ENCODE measurements at regions of chr15 and their contacts with region 1.

Region 1: DNA sequence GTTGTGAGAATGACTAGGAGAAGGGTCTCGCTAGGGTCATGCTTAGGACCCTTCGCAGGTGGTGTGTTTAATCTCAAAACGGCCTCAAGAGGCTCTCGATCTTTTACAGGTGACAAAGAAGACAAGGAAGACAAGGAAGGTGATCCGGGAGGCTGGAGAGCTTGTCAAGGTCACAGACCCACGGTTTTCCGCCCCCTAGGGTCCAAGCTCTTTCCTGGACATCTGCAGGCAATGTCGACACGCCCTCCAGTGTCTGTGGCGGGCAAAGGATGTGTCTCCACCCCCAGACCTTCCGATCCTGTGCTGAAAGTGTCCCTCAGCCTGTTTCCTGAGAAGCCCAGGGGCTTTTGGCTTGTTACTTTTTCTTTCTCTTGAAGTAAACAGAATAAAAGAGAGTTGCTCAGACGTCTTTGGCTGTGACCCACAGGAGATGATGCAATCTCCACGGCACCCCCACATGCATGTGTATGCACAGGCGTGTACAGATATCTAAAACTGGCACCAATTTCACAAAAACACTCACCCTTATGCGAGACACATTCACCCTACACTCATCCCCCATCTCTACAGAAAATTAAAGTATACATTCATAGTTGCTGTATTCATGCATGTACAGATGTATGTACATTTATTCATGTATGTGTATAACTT is 108.8 kb downstream of the KLF13 start:
- DNase-seq: peak; percentile 96
- H3K4me3 Mint-ChIP-seq: peak overlapping the region; percentile 79
- H3K27ac Mint-ChIP-seq: peak overlapping the region; percentile 96
- H3K4me1 Mint-ChIP-seq: peaks cover 78% of the 10 kb centered on the region
- H3K27me3 Mint-ChIP-seq: no peaks in the 10 kb centered on the region

Region 2: GRCh38 chr15:31215490-31216214 is 219.7 kb before region 1 on chr15:
- intact Hi-C with region 1: loop called (anchors 1 kb)
- DNase-seq: peak; percentile 94
- H3K4me3 Mint-ChIP-seq: peak overlapping the region; percentile 87
- H3K27ac Mint-ChIP-seq: peak overlapping the region; percentile 71
- H3K4me1 Mint-ChIP-seq: peaks cover 36% of the 10 kb centered on the region
- H3K27me3 Mint-ChIP-seq: no peaks in the 10 kb centered on the region

Region 3: GRCh38 chr15:31344823-31345605 is 90.4 kb before region 1 on chr15:
- intact Hi-C with region 1: loop called (anchors 1 kb)
- DNase-seq: peak; percentile 76
- H3K4me3 Mint-ChIP-seq: peak overlapping the region; percentile 95
- H3K27ac Mint-ChIP-seq: peak overlapping the region; percentile 99
- H3K4me1 Mint-ChIP-seq: peaks cover 91% of the 10 kb centered on the region
- H3K27me3 Mint-ChIP-seq: no peaks in the 10 kb centered on the region

Region 4: DNA sequence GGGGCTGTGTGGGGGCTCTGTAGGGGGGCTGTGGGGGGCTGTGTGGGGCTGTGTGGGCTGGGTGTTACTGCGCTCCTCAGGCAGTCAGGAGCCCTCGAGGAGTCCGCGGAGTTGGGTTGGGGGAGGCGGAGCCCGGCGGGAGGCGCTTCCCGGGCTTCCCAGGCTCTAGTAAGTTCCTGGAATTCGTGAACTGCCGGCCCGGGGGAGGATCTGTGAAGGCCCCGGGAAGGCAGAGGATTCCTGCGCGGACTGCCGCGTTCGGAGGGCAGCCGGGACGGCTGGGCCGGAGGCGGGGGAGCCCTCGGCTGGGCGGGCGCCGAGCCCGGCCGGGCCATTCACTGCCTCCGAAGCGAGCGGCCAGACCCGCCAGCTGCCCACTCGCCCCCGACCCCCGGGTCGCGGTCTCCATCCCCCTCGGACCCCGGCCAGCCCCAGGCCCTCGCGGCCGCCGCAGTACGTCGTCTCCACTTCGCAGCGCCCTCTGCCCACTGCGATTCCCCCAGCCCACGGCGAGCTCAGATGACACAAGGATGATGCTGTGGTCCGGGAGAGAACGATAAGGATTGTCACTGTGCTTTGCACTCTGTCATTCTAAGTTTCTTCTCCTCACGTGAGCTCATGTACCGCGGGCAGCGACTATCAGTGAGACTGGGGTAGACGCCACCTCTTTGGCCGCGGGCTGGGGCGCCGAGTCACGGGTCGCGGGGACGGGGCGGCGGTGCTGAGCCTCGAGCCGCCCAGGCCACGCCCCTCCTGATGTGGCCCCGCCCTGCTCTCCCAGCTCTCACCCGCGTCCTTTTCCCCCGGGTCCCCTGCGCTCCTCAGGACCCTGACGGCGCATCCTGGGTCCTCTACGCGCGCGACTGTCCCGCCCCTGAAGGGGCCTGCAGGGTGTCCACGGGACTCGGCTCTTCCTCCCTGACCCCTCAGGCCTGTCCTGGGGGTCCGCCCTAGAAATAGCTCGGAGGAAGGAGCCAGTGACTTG is 43.4 kb before region 1 on chr15:
- intact Hi-C with region 1: loop called (anchors 1 kb)
- DNase-seq: peak; percentile 96
- H3K4me3 Mint-ChIP-seq: peak overlapping the region; percentile 87
- H3K27ac Mint-ChIP-seq: peak overlapping the region; percentile 92
- H3K4me1 Mint-ChIP-seq: peaks cover 38% of the 10 kb centered on the region
- H3K27me3 Mint-ChIP-seq: no peaks in the 10 kb centered on the region

Region 5: DNA sequence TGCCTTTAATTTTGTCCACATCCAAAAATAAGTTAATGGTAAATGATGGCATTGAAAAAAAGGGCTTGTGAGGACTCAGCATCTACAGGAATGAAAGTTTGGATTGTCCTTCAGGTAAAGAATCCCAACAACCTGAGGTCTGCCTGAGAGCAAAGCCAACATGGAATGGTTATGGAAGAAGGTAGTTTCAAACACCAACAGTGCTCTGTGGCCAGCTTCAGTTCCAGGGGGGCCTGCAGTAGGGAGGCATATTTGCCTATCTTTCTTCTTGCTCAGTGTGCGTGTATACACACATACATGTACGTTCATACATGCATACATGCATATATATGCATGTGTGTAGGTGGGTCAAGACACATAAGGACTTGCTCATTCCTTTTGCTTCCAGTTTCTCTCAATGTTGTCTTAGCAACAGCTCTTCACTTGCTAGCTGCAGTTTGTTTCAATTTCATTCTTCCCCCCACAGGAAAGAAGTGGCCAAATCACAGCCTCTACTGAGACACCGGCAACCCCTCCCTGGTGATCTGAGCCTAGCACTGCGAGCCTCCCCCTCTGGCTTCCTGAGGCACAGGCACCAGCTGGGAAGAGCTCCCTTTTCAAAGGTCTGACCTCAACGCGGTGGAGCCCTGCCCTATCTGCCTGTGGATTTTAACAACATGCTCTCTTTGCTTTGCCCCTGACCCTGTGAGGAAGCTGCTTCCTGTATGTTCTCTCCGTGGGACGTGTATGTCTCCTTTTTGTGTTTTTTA is 37.4 kb after region 1 on chr15:
- intact Hi-C with region 1: loop called (anchors 1 kb)
- DNase-seq: peak; percentile 93
- H3K4me3 Mint-ChIP-seq: peak overlapping the region; percentile 73
- H3K27ac Mint-ChIP-seq: peak overlapping the region; percentile 90
- H3K4me1 Mint-ChIP-seq: peaks cover 37% of the 10 kb centered on the region
- H3K27me3 Mint-ChIP-seq: no peaks in the 10 kb centered on the region

Measured in activated CD4-positive, alpha-beta T cell treated with anti-CD3 and anti-CD28 coated beads, Interleukin-2, amount 10 ng/mL, durations not matched to agents 24 days and 14 days (primary cell).